ENCODE measurements at regions of chr11 and their contacts with region 1.

Region 1: DNA sequence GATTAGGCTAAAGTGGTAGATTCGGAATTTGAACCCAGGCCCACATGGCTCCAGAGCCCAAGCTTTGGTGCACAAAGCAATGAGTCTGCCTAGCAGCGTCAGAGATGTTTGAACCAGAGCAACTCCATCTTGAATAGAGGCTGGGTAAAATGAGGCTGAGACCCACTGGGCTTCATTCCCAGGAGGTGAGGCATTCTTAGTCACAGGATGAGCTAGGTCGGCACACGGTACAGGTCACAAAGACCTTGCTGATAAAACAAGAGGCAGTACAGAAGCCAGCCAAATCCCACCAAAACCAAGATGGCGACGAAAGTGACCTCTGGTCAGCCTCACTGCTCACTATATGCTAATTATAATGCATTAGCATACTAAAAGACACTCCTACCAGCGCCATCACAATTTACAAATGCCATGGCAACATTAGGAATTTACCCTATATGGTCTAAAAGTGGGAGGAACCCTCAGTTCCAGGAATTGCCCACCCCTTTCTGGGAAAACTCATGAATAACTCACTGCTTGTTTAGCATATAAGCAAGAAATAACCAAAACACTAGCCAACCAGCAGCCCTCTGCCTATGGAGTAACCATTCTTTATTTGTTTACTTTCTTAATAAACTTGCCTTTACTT is 40.3 kb upstream of the DAGLA start:
- DNase-seq: no peak
- ATAC-seq: no peak
- H3K4me3 ChIP-seq: no peak overlapping the region
- H3K27ac ChIP-seq: no peak overlapping the region
- H3K4me1 ChIP-seq: peaks cover 2 to 13% of the 10 kb centered on the region in 2 experiments; a peak in 2 of 4 replicates
- H3K27me3 ChIP-seq: no peaks in the 10 kb centered on the region
- CTCF ChIP-seq: no peak
- POLR2A ChIP-seq: no peak
- RAD21 ChIP-seq: no peak

Region 2: GRCh38 chr11:61254403-61255025 is 385.4 kb before region 1 on chr11:
- CTCF ChIA-PET with region 1: no interaction called
- POLR2A ChIA-PET with region 1: no interaction called
- RAD21 ChIA-PET with region 1: no interaction called
- intact Hi-C with region 1: no loop called
- DNase-seq: peak; percentile 34
- ATAC-seq: peak; percentile 99
- H3K4me3 ChIP-seq: no peak overlapping the region
- H3K27ac ChIP-seq: no peak overlapping the region
- H3K4me1 ChIP-seq: no peaks in the 10 kb centered on the region
- H3K27me3 ChIP-seq: no peaks in the 10 kb centered on the region
- CTCF ChIP-seq: peak; percentile 58 to 89 (median 88); a peak in 5 of 6 replicates
- POLR2A ChIP-seq: no peak
- RAD21 ChIP-seq: peak; percentile 76

Region 3: DNA sequence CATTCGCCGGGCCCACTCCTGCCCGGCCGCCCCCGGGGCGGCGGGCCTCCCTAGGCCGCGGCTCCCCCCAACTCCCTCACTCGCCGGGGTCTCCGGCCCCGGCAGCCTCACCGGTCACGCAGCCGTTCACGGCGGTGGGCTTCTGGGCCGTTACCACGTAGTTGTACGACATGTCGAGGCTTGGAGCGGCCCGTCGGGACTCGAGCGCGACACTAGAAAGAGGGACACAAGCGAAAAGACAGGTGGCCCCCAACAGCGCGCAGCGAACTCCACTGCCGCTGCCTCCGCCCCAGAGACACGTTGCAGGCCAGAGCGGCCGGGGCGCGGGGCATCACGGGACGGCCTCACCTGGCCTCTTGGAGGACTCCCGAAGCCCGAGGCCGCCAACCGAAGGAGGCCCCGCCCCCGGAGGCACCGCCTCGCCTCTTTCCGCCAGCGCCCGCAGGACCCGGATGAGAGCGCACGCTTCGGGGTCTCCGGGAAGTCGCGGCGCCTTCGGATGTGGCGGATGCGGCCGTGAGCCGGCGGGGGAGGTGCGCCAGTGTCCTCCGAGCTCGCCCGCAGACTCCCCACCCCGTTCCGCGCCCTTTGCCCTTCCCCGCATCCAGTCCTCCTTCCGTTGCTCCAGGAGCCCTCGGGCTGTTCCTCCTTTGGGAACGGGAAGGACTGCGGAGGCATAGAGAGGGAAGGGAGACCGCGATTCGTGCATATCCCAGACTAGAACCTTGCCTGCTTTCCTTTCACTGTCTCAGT is 307.0 kb before region 1 on chr11 and contains the starts of genes DDB1 and TKFC:
- CTCF ChIA-PET with region 1: interaction called, 15 read pairs
- POLR2A ChIA-PET with region 1: no interaction called
- RAD21 ChIA-PET with region 1: interaction called in 1 of 2 experiments, 4 read pairs
- intact Hi-C with region 1: no loop called
- DNase-seq: peak; percentile 83
- ATAC-seq: peak; percentile 88
- H3K4me3 ChIP-seq: peak within 1 kb of the TSS; percentile 85 to 97
- H3K27ac ChIP-seq: peak within 1 kb of the TSS; percentile 92
- H3K4me1 ChIP-seq: peaks cover 28 to 46% of the 10 kb centered on the region in 2 experiments
- H3K27me3 ChIP-seq: no peaks in the 10 kb centered on the region
- CTCF ChIP-seq: no peak
- POLR2A ChIP-seq: peak; percentile 75
- RAD21 ChIP-seq: no peak
- total RNA-seq, gene DDB1: 269 TPM
- total RNA-seq, gene TKFC: 156 TPM

Region 4: DNA sequence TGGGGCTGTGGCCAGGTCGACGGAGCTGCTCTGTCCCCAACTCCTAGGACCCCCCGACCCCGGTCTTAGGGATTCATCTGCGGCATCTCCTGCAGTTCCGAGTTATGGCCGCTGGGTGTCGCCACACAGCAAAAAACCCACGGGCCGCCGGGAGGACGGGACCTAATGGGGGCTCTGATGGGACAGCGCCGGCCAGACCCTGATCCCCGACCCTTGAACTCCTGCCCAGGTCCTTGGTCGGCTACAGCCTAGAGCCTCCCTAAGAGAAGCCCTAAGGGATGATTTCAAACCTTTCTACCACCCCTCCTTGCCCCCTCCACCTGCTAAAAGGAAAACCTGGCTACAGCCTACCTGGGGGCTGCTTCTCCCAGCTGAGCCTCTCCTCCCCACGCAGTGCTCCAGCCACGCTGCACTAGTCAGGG is 162.2 kb before region 1 on chr11:
- CTCF ChIA-PET with region 1: interaction called, 14 read pairs
- POLR2A ChIA-PET with region 1: no interaction called
- RAD21 ChIA-PET with region 1: interaction called in 1 of 2 experiments, 4 read pairs
- intact Hi-C with region 1: no loop called
- DNase-seq: no peak
- ATAC-seq: peak; percentile 54
- H3K4me3 ChIP-seq: no peak overlapping the region
- H3K27ac ChIP-seq: no peak overlapping the region
- H3K4me1 ChIP-seq: 0 out of 4 replicates have a peak, but pooled peaks cover 0 to 3% of the 10 kb centered on the region in 2 experiments
- H3K27me3 ChIP-seq: no peaks in the 10 kb centered on the region
- CTCF ChIP-seq: peak; percentile 87 to 93 (median 90)
- POLR2A ChIP-seq: no peak
- RAD21 ChIP-seq: peak; percentile 94

Region 5: DNA sequence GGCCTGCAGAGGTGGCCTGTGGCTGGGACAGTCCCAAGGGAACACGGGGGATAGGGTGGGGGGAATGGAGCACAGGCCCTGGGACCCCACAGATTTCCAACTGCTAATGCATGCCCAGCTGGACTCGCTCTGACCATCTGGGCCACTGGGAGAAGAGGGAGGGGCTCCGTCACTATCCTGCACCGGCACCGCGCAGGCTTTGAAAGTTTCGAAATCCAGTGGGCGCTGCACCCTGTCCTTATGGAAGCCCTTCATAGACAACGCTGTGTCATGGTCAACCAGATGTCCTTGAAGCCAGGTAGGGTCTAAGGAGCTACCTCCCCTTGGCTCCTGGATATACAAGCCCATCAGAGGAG is 101.3 kb before region 1 on chr11:
- CTCF ChIA-PET with region 1: no interaction called
- POLR2A ChIA-PET with region 1: no interaction called
- RAD21 ChIA-PET with region 1: no interaction called
- intact Hi-C with region 1: no loop called
- DNase-seq: no peak
- ATAC-seq: no peak
- H3K4me3 ChIP-seq: no peak overlapping the region
- H3K27ac ChIP-seq: no peak overlapping the region
- H3K4me1 ChIP-seq: peaks cover 6 to 18% of the 10 kb centered on the region in 2 experiments
- H3K27me3 ChIP-seq: no peaks in the 10 kb centered on the region
- CTCF ChIP-seq: no peak
- POLR2A ChIP-seq: no peak
- RAD21 ChIP-seq: no peak

Region 6: GRCh38 chr11:61567286-61568061 is 72.5 kb before region 1 on chr11:
- CTCF ChIA-PET with region 1: interaction called, 10 read pairs
- POLR2A ChIA-PET with region 1: no interaction called
- RAD21 ChIA-PET with region 1: interaction called in 1 of 2 experiments, 3 read pairs
- intact Hi-C with region 1: no loop called
- DNase-seq: peak; percentile 81
- ATAC-seq: peak; percentile 96
- H3K4me3 ChIP-seq: peak overlapping the region in 1 of 2 experiments; percentile 28; a peak in 1 of 4 replicates
- H3K27ac ChIP-seq: no peak overlapping the region
- H3K4me1 ChIP-seq: peaks cover 5 to 14% of the 10 kb centered on the region in 2 experiments; a peak in 3 of 4 replicates
- H3K27me3 ChIP-seq: no peaks in the 10 kb centered on the region
- CTCF ChIP-seq: peak; percentile 92 to 96 (median 94)
- POLR2A ChIP-seq: no peak
- RAD21 ChIP-seq: no peak; the same call in 1 of the 2 replicates

Region 7: DNA sequence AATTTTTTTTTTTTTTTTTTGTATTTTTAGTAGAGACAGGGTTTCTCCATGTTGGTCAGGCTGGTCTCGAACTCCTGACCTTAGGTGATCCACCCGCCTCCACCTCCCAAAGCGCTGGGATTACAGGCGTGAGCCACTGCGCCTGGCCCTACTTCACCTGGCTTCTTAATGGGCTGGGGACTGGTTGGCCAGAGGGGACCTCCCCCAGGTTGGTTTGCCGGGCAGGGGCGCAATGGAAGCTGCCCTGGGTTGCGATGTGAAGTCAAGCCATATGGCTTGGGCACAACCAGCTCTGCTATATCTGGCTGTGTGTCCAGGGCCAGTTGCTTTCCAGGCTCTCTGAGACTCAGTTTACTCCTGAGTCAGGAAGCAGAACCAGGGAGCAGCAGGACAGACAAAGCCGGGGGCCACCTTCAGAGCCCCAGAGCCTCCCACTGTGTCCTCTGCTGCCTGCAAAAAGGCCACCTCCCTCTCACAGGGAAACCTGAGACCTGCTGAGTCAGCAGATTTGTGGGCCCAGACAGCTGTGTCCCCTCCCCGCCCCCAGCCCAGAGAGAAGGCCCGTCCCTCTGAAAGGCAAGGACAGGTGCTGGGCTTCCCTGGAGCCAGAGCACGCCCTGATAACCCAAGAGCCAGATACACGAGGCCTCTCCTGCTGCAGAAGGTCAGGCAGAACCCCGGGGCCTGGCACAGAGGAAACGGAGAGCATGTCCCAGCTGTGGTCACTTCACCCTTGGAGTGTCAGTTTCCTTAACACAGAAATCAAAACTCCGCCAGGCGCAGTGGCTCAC is 11.0 kb after region 1 on chr11:
- CTCF ChIA-PET with region 1: interaction called, 13 read pairs
- POLR2A ChIA-PET with region 1: no interaction called
- RAD21 ChIA-PET with region 1: interaction called in 1 of 2 experiments, 4 read pairs
- intact Hi-C with region 1: no loop called
- DNase-seq: no peak
- ATAC-seq: no peak
- H3K4me3 ChIP-seq: no peak overlapping the region
- H3K27ac ChIP-seq: no peak overlapping the region
- H3K4me1 ChIP-seq: peaks cover 0 to 4% of the 10 kb centered on the region in 2 experiments; a peak in 2 of 4 replicates
- H3K27me3 ChIP-seq: no peaks in the 10 kb centered on the region
- CTCF ChIP-seq: no peak
- POLR2A ChIP-seq: no peak
- RAD21 ChIP-seq: no peak

Measured in HCT116 (cell line).